ENCODE measurements at regions of chr15 and their contacts with region 1.

Region 1: DNA sequence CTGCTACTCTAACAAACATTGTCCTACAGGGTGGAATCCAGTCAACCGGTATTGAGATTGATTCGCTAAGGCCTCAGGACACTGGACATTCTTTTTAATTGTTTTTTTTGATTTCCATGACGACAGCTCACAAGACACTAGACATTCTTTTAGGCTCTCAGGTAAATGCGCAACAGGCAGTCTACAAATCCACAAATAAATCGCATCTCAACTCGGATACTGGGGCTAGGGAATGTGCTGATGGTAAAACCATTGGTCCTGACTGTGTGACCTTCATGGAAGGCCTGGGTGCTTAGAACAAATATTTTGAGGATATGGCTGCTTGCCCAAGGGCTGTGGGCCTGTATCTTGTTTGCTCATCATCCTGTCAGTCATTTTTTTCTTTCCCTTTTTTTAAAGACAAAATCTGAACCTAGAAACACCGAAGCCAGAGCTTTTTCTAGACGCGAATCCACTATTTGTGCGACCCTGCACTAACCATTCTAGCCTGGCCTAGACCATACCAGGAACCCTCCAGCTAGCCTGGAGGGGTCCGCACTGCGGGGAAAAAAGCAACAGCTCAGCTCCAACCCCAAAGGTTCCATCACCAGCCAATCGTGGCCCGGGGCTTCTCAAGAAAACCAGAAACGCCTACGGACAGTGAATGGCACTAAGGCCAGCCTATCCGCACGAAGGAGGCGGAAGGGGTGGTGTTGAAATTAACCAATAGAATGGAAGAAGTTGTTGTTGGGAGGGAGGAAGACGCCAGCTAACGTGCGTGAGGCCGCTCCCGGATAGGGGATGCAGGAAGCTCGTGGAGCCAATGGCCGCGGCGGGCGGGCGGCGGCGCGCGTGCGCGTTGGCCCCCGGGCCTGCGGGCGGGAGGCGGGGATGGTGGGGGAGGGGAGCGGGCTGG is 18.1 kb upstream of the CHD2 start:
- DNase-seq: peak; percentile 95 to 99
- ATAC-seq: peak; percentile 89 to 97 (median 91)
- H3K4me3 ChIP-seq: peak overlapping the region; percentile 32
- H3K4me3 Mint-ChIP-seq: peak overlapping the region; percentile 87
- H3K27ac ChIP-seq: peak overlapping the region; percentile 86
- H3K27ac Mint-ChIP-seq: peak overlapping the region; percentile 93 to 98
- H3K4me1 ChIP-seq: peaks cover 19% of the 10 kb centered on the region
- H3K4me1 Mint-ChIP-seq: peaks cover 43 to 52% of the 10 kb centered on the region in 2 donors
- H3K27me3 ChIP-seq: no peaks in the 10 kb centered on the region
- H3K27me3 Mint-ChIP-seq: peaks cover 9 to 16% of the 10 kb centered on the region in 2 donors
- CTCF ChIP-seq: no peak

Region 2: GRCh38 chr15:92808978-92809879 is 72.8 kb before region 1 on chr15:
- intact Hi-C with region 1: loop called (anchors 1 kb)
- DNase-seq: peak; percentile 96 to 99
- ATAC-seq: peak; percentile 83 to 95 (median 88)
- H3K4me3 ChIP-seq: peak overlapping the region; percentile 60
- H3K4me3 Mint-ChIP-seq: peak overlapping the region; percentile 91
- H3K27ac ChIP-seq: peak overlapping the region; percentile 96
- H3K27ac Mint-ChIP-seq: peak overlapping the region; percentile 95 to 96
- H3K4me1 ChIP-seq: peaks cover 24% of the 10 kb centered on the region
- H3K4me1 Mint-ChIP-seq: peaks cover 26 to 27% of the 10 kb centered on the region in 2 donors
- H3K27me3 ChIP-seq: no peaks in the 10 kb centered on the region
- H3K27me3 Mint-ChIP-seq: no peaks in the 10 kb centered on the region
- CTCF ChIP-seq: peak; percentile 97

Region 3: GRCh38 chr15:92903941-92904831 is 22.1 kb after region 1 on chr15:
- intact Hi-C with region 1: loop called (anchors 1 kb)
- DNase-seq: peak; percentile 99
- ATAC-seq: peak; percentile 73 to 95 (median 86)
- H3K4me3 ChIP-seq: peak overlapping the region; percentile 65
- H3K4me3 Mint-ChIP-seq: peak overlapping the region; percentile 93
- H3K27ac ChIP-seq: peak overlapping the region; percentile 99
- H3K27ac Mint-ChIP-seq: peak overlapping the region; percentile 99 to 100
- H3K4me1 ChIP-seq: peaks cover 27% of the 10 kb centered on the region
- H3K4me1 Mint-ChIP-seq: peaks cover 76% of the 10 kb centered on the region in 2 donors
- H3K27me3 ChIP-seq: no peaks in the 10 kb centered on the region
- H3K27me3 Mint-ChIP-seq: no peaks in the 10 kb centered on the region
- CTCF ChIP-seq: no peak